K562 (cell line): ENCODE measurements at regions of chr16 and their contacts with region 1.

Region 1: GRCh38 chr16:11609474-11610457 is 23.0 kb upstream of the LITAF start:
- DNase-seq: no peak
- ATAC-seq: no peak
- H3K4me3 ChIP-seq: no peak overlapping the region
- H3K27ac ChIP-seq: no peak overlapping the region
- H3K4me1 ChIP-seq: peaks cover 25 to 26% of the 10 kb centered on the region in 2 experiments
- H3K27me3 ChIP-seq: peaks cover 0 to 6% of the 10 kb centered on the region in 2 experiments; a peak in 1 of 5 replicates
- CTCF ChIP-seq: no peak
- EP300 ChIP-seq: no peak
- POLR2A ChIP-seq: no peak
- RAD21 ChIP-seq: no peak

Region 2: GRCh38 chr16:11597239-11598101 is 12.3 kb before region 1 on chr16:
- CTCF ChIA-PET with region 1: no interaction called
- POLR2A ChIA-PET with region 1: interaction called, 11 read pairs
- in situ Hi-C with region 1: no loop called
- intact Hi-C with region 1: no loop called
- DNase-seq: peak in 1 of 4 experiments; percentile 26
- ATAC-seq: peak; percentile 61
- H3K4me3 ChIP-seq: no peak overlapping the region
- H3K27ac ChIP-seq: no peak overlapping the region
- H3K4me1 ChIP-seq: no peaks in the 10 kb centered on the region; a peak in 2 of 5 replicates
- H3K27me3 ChIP-seq: peaks cover 0 to 16% of the 10 kb centered on the region in 2 experiments; a peak in 2 of 5 replicates
- CTCF ChIP-seq: no peak
- EP300 ChIP-seq: no peak
- POLR2A ChIP-seq: no peak
- RAD21 ChIP-seq: no peak

Region 3: GRCh38 chr16:11639925-11640899 is 30.4 kb after region 1 on chr16:
- CTCF ChIA-PET with region 1: no interaction called
- POLR2A ChIA-PET with region 1: no interaction called
- in situ Hi-C with region 1: no loop called
- intact Hi-C with region 1: loop called (anchors 1 kb)
- DNase-seq: peak in 3 of 4 experiments; percentile 10 to 23 (median 22)
- ATAC-seq: peak; percentile 46
- H3K4me3 ChIP-seq: no peak overlapping the region
- H3K27ac ChIP-seq: no peak overlapping the region
- H3K4me1 ChIP-seq: peaks cover 0 to 10% of the 10 kb centered on the region in 2 experiments; a peak in 3 of 5 replicates
- H3K27me3 ChIP-seq: peaks cover 6 to 45% of the 10 kb centered on the region in 2 experiments; a peak in 4 of 5 replicates
- CTCF ChIP-seq: no peak
- EP300 ChIP-seq: peak; percentile 3
- POLR2A ChIP-seq: no peak
- RAD21 ChIP-seq: no peak